ENCODE measurements at regions of chr1 and their contacts with region 1.

Region 1: DNA sequence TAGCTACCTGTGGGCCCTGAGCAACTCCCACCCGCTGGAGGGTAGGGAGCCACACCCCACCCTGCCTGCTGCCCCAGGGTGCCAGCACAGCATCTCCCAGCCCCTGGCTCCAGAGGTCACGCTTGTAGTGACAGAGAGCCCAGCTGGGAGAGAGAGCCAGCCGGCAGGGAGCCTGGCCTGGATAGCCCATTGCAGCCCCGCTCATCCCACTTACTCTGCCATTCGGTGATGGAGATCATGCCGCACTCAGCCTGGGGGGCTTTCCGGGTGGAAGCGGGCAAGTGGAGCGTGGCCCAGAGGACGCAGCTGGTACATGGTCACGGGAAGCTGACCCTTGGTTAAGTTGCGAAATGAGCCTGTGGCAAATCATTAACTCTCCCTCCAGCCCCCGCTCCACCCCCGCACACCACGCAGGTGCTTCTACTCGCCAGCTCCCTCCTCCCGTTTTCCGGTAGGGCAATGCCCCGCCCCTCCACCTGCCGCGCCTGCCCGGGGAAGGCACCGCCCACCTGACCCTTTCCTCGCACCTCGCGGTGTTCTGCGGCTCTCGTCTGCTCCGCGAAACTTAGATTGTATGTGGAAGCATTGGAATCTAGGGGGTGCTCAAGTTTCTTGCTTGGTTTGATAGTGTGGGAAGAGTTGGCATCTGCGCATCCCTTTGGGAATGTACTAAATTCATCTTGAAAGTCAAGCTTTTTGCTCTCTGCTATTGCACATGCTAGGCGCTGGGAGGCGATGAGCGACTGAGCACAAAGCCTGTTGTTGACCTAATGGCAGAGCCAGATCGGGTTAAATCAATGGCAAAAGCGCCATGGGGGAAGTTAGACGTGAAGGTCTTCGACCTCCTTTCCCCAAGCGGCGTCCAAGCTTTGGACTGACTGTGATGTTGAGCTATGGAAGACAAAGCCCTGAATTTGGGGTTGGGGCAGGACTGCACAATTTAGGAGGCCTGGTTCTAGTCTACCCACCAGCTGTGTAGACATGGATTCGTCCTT is at the start of gene GOLT1A:
- DNase-seq: peak; percentile 59
- H3K4me3 ChIP-seq: peak within 1 kb of the TSS; percentile 8
- CTCF ChIP-seq: peak; percentile 75

Region 2: DNA sequence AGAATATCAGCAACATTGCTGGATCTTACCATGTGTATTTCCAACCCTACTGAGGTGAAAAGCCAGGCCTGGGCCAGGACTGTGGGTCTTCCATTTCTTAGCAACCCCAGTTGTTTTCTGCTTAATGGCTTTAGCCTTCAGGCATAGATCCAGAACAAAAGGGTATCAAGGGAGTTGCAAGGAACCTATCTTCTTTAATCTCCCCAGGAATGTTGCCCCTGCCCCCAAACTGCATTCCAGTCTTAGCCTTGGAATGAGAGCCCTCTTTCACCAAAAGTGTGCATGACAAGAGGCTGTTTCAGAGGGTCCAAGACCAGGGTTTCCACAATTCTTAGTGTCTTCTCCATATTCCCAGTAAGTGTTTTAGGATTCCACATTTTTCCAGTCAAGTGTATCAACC is 228.9 kb before region 1 on chr1:
- CTCF ChIA-PET with region 1: no interaction called
- POLR2A ChIA-PET with region 1: no interaction called
- DNase-seq: no peak
- H3K4me3 ChIP-seq: no peak overlapping the region
- CTCF ChIP-seq: no peak

Region 3: DNA sequence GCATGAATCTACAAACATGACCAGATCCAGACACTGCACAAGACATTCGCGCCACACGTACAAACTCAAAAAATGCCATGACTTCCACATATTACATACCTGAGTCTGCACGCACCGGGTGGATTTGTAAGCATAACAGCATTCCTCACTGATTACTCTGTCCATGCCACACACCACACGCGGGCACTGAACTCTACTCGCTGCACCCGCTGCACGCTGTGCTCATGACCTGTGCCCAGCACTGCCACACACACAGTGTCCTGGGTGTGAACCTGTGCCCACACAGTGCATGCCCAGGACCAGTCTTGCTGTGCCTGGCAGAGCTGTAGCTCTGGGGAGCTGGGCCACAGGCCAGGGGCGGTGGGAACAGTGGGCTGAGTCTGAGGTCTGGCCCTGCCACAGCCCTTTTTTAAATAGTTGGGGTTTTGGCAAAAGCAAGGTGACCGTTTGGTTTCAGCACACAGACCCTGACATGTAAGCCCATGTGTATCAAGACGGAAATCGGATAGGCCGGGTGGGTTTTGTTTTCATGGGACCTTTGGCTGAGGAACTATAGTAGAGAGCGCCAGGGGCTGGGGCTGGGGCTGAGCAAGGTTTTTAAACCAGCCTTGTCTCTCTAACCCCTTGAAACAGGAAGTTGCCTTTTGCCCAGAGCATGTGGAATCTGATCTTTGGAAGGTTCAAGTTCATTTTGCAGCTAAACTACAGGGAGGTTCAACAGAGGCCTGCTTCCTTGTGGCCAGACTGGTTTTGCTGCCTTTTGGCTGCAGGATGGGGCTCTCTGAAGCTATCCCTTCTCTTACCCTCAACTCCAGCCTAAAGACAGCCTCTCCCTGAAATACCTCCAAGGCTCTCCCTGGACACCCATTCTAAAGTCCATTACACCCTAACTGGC is 12.1 kb after region 1 on chr1:
- CTCF ChIA-PET with region 1: interaction called, 39 read pairs
- POLR2A ChIA-PET with region 1: no interaction called
- DNase-seq: no peak
- H3K4me3 ChIP-seq: no peak overlapping the region
- CTCF ChIP-seq: no peak

Region 4: DNA sequence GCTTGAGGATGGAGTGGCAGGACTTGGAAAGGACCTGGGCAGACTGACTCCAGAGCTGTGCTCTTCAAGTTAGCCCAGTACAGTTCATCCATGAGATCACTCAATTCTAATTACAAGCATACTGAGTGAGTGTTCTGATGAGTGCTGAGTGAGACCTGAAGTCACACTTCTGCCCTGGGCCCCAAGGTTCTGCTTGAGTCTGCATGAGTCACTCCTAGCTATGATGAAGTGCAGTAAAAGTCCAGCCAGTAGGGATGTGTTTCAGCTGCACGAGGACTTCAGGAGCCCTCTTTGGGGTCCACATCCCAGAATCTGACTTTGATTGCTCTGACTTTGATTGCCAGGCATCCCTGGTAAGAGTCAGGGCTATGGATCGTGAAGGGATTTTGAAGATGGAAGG is 109.9 kb after region 1 on chr1:
- CTCF ChIA-PET with region 1: interaction called, 10 read pairs
- POLR2A ChIA-PET with region 1: no interaction called
- DNase-seq: no peak
- H3K4me3 ChIP-seq: no peak overlapping the region
- CTCF ChIP-seq: no peak

Region 5: DNA sequence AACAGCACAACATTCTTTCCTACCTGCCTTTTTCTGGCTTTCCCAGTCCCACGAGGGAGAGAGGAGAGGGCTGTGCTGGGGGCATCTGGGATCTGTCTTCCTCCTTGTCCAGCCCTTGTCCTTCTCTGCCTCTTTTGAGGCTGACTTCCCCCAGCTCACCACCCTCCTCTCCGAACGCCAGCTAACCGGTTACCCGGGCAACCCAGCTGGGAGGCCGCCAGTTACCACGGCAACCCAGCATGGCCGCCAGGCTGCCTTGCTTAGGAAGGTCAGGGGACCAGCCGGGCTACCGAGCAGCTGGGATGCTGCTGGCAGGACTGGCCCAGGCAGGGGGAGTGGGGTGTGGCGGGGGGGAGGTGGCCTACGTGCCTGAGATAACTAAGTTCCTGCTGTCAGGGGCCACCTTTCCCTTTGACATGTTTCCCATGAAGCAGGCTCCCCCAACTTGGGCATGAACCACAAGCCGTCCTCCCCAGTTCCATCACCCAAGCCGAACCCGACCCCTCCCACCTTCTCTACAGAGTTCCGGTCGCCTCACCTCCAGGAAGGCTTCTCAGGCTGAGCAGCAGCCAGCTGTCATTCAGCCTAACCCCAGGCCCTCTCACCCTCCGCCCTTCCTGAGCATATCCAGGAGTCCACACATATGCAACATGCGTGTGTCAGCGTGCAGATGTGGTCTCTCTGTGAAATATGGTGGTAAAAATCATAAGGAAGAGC is 137.1 kb after region 1 on chr1:
- CTCF ChIA-PET with region 1: interaction called, 14 read pairs
- POLR2A ChIA-PET with region 1: no interaction called
- DNase-seq: no peak
- H3K4me3 ChIP-seq: peak overlapping the region; percentile 45
- CTCF ChIP-seq: no peak